OCI-LY7 (cell line): ENCODE measurements at regions of chr12 and their contacts with region 1.

Region 1: DNA sequence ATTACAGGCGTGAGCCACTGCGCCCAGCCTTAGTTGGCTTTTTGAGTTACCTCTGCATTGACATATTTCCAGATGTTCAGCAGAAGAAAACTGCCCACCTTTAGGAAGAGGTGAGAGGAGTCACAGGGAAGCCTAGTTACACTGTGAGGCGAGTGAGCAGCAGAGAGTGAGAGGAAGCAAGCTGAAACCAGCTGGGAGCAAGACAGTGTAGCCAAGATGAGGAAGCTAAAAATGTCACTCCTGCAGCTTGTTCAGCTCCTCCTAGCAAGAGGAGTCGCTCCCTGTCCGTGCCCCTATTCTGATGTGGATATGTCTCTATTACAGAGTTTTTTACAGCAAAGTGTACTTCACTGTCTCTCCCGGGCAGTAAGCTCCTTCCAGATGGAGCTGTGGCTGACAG is 127.6 kb downstream of the GXYLT1 start:
- DNase-seq: peak; percentile 77
- H3K4me3 ChIP-seq: peak overlapping the region; percentile 14
- H3K27ac ChIP-seq: peak overlapping the region; percentile 87
- H3K4me1 ChIP-seq: peaks cover 87% of the 10 kb centered on the region
- CTCF ChIP-seq: no peak

Region 2: GRCh38 chr12:41684997-41685396 is 332.1 kb before region 1 on chr12:
- CTCF ChIA-PET with region 1: no interaction called
- POLR2A ChIA-PET with region 1: no interaction called
- intact Hi-C with region 1: loop called (anchors 2 kb)
- DNase-seq: no peak
- H3K4me3 ChIP-seq: no peak overlapping the region
- H3K27ac ChIP-seq: no peak overlapping the region
- H3K4me1 ChIP-seq: peaks cover 30% of the 10 kb centered on the region
- CTCF ChIP-seq: no peak; the same call in 1 of the 2 replicates

Region 3: GRCh38 chr12:41932470-41932991 is 84.5 kb before region 1 on chr12:
- CTCF ChIA-PET with region 1: no interaction called
- POLR2A ChIA-PET with region 1: no interaction called
- intact Hi-C with region 1: loop called (anchors 5 kb)
- DNase-seq: peak; percentile 72
- H3K4me3 ChIP-seq: peak overlapping the region; percentile 59
- H3K27ac ChIP-seq: no peak overlapping the region
- H3K4me1 ChIP-seq: peaks cover 11% of the 10 kb centered on the region
- CTCF ChIP-seq: peak; percentile 40; the same call in 1 of the 2 replicates

Region 4: GRCh38 chr12:42904683-42905418 is 887.8 kb after region 1 on chr12:
- CTCF ChIA-PET with region 1: no interaction called
- POLR2A ChIA-PET with region 1: no interaction called
- intact Hi-C with region 1: no loop called
- DNase-seq: no peak
- H3K4me3 ChIP-seq: no peak overlapping the region
- H3K27ac ChIP-seq: no peak overlapping the region
- H3K4me1 ChIP-seq: no peaks in the 10 kb centered on the region
- CTCF ChIP-seq: no peak